ENCODE measurements at regions of chr6 and their contacts with region 1.

Region 1: GRCh38 chr6:7431674-7432390 is 42.2 kb downstream of the RIOK1 start:
- DNase-seq: no peak
- ATAC-seq: no peak
- H3K4me3 ChIP-seq: no peak overlapping the region
- H3K27ac ChIP-seq: no peak overlapping the region
- H3K4me1 ChIP-seq: no peaks in the 10 kb centered on the region
- H3K27me3 ChIP-seq: peaks cover 0 to 14% (median 4%) of the 10 kb centered on the region in 3 donors
- CTCF ChIP-seq: no peak

Region 2: DNA sequence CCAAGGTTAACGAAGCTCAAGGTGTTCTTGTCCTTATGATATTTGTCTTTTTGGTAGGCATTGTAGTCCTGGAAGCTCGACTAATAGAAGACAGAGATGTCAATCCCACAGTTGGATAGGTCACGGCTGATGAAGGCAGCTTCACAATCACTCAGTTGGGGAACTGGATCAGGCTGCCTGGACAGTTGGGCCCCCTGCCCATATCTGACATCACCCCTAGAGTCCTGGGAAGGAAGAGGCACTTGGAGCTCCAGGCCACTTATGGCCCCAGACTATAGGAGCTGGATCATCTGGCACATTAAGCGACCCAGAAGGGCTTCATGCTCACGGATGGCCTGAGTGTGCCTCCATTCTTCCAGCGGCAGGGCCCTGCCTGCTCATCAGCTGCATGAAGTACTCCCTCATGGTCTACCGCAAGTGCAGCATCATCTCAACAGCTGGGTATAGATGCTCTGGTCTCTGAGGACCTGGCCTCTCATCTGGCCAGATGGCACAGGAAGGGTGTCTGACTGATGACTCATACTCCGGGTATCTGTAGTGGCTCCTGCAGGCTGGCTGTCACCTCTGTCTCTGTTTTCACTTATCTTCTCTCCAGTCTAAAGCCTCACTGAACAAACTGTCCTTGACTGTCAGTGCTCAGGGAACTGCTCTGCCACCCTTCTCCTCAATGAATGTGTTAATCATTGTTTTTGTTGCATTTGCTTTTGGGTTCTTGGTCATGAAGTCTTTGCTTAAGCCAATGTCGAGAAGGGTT is 89.7 kb before region 1 on chr6:
- intact Hi-C with region 1: no loop called
- DNase-seq: no peak
- ATAC-seq: no peak
- H3K4me3 ChIP-seq: no peak overlapping the region
- H3K27ac ChIP-seq: no peak overlapping the region
- H3K4me1 ChIP-seq: no peaks in the 10 kb centered on the region
- H3K27me3 ChIP-seq: no peaks in the 10 kb centered on the region
- CTCF ChIP-seq: no peak

Region 3: GRCh38 chr6:9178071-9178470 is 1746.2 kb after region 1 on chr6:
- intact Hi-C with region 1: loop called in 1 of 2 experiments (anchors 5 kb)
- DNase-seq: no peak
- ATAC-seq: no peak
- H3K4me3 ChIP-seq: no peak overlapping the region
- H3K27ac ChIP-seq: no peak overlapping the region
- H3K4me1 ChIP-seq: no peaks in the 10 kb centered on the region
- H3K27me3 ChIP-seq: no peaks in the 10 kb centered on the region
- CTCF ChIP-seq: no peak

Measured in psoas muscle (tissue), 8 donors.